Activated CD8-positive, alpha-beta memory T cell treated with anti-CD3 and anti-CD28 coated beads, Interleukin-2, amount 10 ng/mL, durations not matched to agents 7 days and 5 days (primary cell): ENCODE measurements at regions of chr1 and their contacts with region 1.

Region 1: GRCh38 chr1:223123011-223123610 is 19.9 kb downstream of the TLR5 start:
- DNase-seq: no peak
- ATAC-seq: no peak
- H3K4me3 Mint-ChIP-seq: no peak overlapping the region
- H3K27ac Mint-ChIP-seq: no peak overlapping the region
- H3K4me1 Mint-ChIP-seq: peaks cover 19% of the 10 kb centered on the region
- H3K27me3 Mint-ChIP-seq: peaks cover 10% of the 10 kb centered on the region

Region 2: DNA sequence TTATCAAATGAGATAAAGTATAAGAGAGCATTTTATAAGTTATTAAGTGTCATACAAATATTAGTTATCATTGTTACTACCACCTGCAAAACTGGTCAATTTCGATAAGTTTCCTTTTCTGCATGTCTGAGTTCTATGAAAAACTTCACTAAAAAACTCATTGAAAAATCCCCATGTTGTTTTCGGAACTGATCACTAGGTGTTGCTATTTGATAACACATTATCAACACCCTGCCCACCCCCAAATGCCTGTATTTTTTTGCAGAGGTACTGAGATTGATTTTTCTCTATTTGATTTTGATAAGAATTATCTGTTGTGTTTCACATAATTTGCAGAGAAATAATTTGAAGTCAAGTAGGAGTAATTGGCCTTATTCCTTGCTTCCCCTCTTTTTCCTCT is 330.4 kb before region 1 on chr1:
- CTCF ChIA-PET with region 1: interaction called, 10 read pairs
- DNase-seq: no peak
- ATAC-seq: no peak
- H3K4me3 Mint-ChIP-seq: no peak overlapping the region
- H3K27ac Mint-ChIP-seq: no peak overlapping the region
- H3K4me1 Mint-ChIP-seq: peaks cover 19% of the 10 kb centered on the region
- H3K27me3 Mint-ChIP-seq: peaks cover 5% of the 10 kb centered on the region

Region 3: GRCh38 chr1:223087291-223088255 is 35.5 kb before region 1 on chr1:
- CTCF ChIA-PET with region 1: interaction called, 22 read pairs
- DNase-seq: no peak
- ATAC-seq: no peak
- H3K4me3 Mint-ChIP-seq: no peak overlapping the region
- H3K27ac Mint-ChIP-seq: no peak overlapping the region
- H3K4me1 Mint-ChIP-seq: no peaks in the 10 kb centered on the region
- H3K27me3 Mint-ChIP-seq: peaks cover 8% of the 10 kb centered on the region

Region 4: GRCh38 chr1:223133824-223134435 is 10.8 kb after region 1 on chr1:
- CTCF ChIA-PET with region 1: interaction called, 59 read pairs
- DNase-seq: peak; percentile 79
- ATAC-seq: peak; percentile 88
- H3K4me3 Mint-ChIP-seq: no peak overlapping the region
- H3K27ac Mint-ChIP-seq: no peak overlapping the region
- H3K4me1 Mint-ChIP-seq: peaks cover 12% of the 10 kb centered on the region
- H3K27me3 Mint-ChIP-seq: peaks cover 62% of the 10 kb centered on the region

Region 5: GRCh38 chr1:223142795-223143536 is 19.9 kb after region 1 on chr1 and contains the start of gene TLR5:
- CTCF ChIA-PET with region 1: interaction called, 15 read pairs
- DNase-seq: peak; percentile 87
- ATAC-seq: peak; percentile 94
- H3K4me3 Mint-ChIP-seq: peak within 1 kb of the TSS; percentile 57
- H3K27ac Mint-ChIP-seq: no peak within 1 kb of the TSS
- H3K4me1 Mint-ChIP-seq: peaks cover 7% of the 10 kb centered on the region
- H3K27me3 Mint-ChIP-seq: peaks cover 22% of the 10 kb centered on the region
- total RNA-seq, gene TLR5: 0.09 to 0.80 TPM

Region 6: GRCh38 chr1:223298701-223299100 is 175.6 kb after region 1 on chr1:
- CTCF ChIA-PET with region 1: no interaction called
- DNase-seq: no peak
- ATAC-seq: no peak
- H3K4me3 Mint-ChIP-seq: no peak overlapping the region
- H3K27ac Mint-ChIP-seq: no peak overlapping the region
- H3K4me1 Mint-ChIP-seq: no peaks in the 10 kb centered on the region
- H3K27me3 Mint-ChIP-seq: no peaks in the 10 kb centered on the region